Posterior vena cava (tissue), 2 donors: ENCODE measurements at regions of chr2 and their contacts with region 1.

Region 1: GRCh38 chr2:213251618-213252017 is 32.6 kb upstream of the SPAG16 start:
- DNase-seq: no peak

Region 2: DNA sequence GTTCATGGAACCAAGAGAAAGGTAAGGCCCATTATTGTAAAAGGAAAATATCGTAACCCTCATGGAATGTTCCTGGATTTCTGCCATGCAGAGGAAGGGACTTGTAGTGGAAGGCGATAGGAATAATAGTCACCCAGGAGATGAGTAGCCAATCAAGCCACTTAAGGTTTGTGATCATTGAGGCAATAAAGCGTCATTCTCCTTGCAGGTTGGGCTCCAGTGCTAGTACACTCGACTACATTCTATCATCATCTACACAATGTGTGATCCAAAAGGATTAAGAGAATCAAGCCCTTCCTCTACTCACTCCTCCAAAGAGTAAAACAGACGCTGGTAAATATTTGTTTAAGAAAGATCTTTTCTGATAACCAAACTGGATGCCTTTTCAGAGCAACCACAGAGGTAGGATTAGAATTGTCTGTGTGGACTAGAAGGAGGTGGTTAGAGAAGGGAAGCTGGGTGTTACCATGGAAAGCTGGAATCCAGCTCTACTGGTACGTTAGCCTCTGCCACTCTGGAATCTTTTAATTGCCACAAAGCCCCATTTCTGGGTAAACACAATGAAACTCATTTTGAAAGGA is 345.9 kb before region 1 on chr2:
- intact Hi-C with region 1: loop called in 1 of 2 experiments (anchors 5 kb)
- DNase-seq: no peak